K562 (cell line): ENCODE measurements at regions of chr7 and their contacts with region 1.

Region 1: GRCh38 chr7:98133181-98133580 is 26.5 kb downstream of the LMTK2 start:
- DNase-seq: peak in 3 of 4 experiments; percentile 35 to 80 (median 75)
- ATAC-seq: peak; percentile 91
- H3K4me3 ChIP-seq: no peak overlapping the region
- H3K27ac ChIP-seq: peak overlapping the region; percentile 32; the same call in 1 of the 3 replicates
- H3K4me1 ChIP-seq: peaks cover 19 to 29% of the 10 kb centered on the region in 2 experiments
- H3K27me3 ChIP-seq: no peaks in the 10 kb centered on the region
- CTCF ChIP-seq: no peak
- EP300 ChIP-seq: peak; percentile 77
- POLR2A ChIP-seq: no peak
- RAD21 ChIP-seq: no peak

Region 2: DNA sequence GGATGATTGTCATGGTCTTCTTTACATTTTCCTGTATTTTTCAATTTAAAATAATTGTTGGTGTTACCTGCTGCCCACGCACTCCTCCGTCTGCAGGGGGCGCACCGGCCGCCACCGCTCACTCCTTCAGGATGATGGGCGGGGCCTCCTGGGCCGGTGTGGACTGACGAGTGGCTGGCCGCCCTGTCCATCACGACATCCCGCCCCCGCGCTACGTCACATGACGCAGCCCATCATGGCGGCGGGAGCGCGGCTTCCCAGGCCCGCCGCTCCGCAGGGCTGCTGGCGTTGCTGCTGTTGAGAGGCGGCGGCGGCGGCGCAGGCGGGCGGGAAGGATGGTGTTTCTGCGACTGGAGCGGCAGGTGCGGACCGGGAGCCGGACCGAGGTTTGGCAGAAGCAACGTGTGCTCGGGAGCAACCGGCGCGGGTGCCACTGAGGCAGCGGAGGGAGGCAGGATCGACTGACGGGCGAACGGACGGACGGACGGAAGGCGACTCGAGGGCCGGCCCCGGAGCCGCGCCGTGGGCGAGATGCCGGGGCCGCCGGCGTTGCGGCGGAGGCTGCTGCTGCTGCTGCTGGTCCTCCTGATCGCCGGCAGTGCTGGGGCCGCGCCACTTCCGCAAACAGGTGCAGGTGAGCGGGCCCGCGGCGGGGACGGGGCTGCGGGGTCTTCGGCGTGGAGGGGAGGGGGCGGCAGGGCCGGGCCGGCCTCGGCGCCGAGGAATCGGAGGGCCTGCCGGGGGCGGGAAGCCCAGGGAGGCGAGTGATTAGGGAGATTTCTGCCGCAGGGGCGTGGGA is 26.3 kb before region 1 on chr7 and contains the start of gene LMTK2:
- CTCF ChIA-PET with region 1: no interaction called
- POLR2A ChIA-PET with region 1: interaction called, 5 read pairs
- in situ Hi-C with region 1: no loop called
- intact Hi-C with region 1: loop called (anchors 2 kb)
- DNase-seq: peak; percentile 97 to 100 (median 100)
- ATAC-seq: peak; percentile 99
- H3K4me3 ChIP-seq: peak within 1 kb of the TSS; percentile 88
- H3K27ac ChIP-seq: peak within 1 kb of the TSS; percentile 75
- H3K4me1 ChIP-seq: peaks cover 11 to 17% of the 10 kb centered on the region in 2 experiments
- H3K27me3 ChIP-seq: peaks cover 0 to 3% of the 10 kb centered on the region in 2 experiments; a peak in 1 of 5 replicates
- CTCF ChIP-seq: peak; percentile 89 to 99 (median 97)
- EP300 ChIP-seq: no peak
- POLR2A ChIP-seq: peak; percentile 96
- RAD21 ChIP-seq: peak; percentile 76 to 79
- polyA plus RNA-seq, gene LMTK2: 0.78 to 1.8 TPM